ENCODE measurements at regions of chr7 and their contacts with region 1.

Region 1: DNA sequence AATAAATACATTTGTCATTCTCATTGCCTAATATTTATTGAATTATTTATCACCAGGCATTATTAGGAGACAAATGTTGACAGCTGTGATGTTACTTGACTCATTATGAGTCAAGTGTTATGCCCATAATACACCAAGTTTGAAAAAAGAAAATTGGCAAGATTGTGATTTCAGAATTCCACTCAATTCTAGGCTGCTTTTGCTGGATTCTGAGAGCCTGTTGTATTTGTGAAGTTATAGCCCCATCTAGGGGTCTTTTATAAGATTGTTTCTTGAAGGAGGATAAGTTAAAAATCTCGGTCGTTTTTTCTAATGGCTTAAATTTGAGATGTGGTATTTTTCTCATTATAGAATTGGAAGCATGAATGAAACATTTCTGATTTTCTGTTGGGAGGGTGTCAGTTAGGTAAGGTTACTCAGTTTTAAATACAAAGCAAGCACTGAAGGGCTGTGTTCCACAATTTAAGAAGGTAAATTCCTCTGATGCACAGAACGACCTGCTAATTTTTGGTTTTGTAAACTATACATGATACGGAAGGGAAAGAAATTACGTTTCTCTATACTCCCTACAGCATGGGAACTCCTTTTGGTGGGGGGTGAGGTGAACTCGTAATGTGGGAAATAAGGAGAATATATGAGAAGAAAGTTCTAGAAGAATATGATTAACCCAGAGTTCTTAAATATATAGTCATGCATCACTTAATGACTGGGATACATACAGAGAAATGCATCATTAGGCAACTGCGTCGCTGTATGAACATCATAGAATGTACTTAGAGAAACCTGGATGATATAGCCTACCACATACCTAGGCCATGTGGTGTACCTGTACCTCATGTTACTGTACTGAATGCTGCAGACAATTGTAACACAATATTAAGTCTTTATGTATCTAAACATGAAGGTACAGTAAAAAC is 2.6 kb downstream of the STK31 start:
- DNase-seq: peak in 1 of 2 donors; percentile 81
- H3K4me3 ChIP-seq: no peak overlapping the region
- H3K27ac ChIP-seq: no peak overlapping the region
- H3K4me1 ChIP-seq: peaks cover 0 to 13% (median 4%) of the 10 kb centered on the region in 4 donors
- H3K27me3 ChIP-seq: no peaks in the 10 kb centered on the region
- CTCF ChIP-seq: peak in 5 of 7 experiments; percentile 17 to 65 (median 41)
- EP300 ChIP-seq: no peak
- POLR2A ChIP-seq: no peak

Region 2: DNA sequence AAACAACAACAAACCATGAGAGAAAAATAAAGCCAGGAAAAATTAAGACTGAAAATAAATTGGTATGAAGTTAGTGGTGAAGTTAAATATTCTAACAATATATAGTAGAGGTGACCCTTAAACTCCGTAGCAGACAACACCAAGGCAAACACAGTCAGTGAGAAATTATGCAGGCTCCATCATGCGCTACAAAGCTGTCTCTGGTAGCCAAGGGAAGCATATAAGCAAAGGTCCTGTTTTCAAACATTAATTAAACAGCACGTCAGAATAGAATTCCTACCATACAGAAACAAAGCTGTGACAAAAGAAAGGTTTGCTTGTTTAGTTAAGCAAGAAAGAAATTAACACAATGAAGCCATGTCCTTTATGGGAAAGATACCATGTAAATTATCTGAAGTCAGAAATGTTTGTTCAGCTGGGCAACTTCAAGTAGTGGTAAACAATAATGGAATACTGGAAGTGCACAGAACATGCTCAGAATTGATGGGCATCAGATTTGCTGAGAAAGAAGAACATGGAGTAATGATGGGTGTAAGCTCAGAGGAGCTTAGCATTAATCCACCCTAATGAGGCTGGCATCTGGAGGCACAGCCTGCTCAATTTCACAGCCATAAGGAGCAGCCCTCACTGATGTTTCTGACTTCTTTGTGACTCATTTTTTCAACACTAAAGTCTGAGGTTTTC is 318.0 kb before region 1 on chr7:
- intact Hi-C with region 1: no loop called
- DNase-seq: peak in 1 of 2 donors; percentile 56
- H3K4me3 ChIP-seq: no peak overlapping the region
- H3K27ac ChIP-seq: no peak overlapping the region
- H3K4me1 ChIP-seq: peaks cover 0 to 25% (median 0%) of the 10 kb centered on the region in 4 donors
- H3K27me3 ChIP-seq: no peaks in the 10 kb centered on the region
- CTCF ChIP-seq: no peak
- EP300 ChIP-seq: no peak
- POLR2A ChIP-seq: no peak

Region 3: DNA sequence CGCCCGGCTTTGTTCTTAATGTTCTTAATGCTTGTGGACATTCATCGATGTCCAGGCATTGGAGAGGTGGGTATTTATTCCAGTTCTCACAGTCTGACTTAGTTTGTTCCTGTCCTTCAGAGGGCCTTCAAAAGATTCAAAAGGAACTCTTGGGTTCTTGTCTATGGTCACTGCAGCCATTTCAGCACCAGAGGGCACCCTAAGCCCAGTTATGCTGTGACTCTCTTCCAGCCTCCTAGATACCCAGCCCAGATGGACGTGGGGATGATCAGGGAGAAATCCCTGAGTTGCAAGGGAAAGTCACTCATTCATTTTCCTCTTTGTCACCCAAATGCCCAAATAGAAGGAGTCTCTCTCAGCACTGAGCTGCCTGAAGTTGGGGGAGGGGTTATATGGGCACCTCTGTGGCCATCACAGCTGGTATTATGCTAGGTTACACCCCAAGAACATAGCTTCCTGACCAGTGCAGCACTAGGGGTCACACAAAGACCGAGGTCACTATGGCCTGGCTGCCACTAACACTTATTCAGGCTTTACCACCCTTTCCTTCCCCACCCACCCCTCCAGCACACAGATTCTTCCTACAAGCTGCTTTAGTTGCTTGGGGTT is 141.9 kb before region 1 on chr7:
- intact Hi-C with region 1: loop called (anchors 5 kb)
- DNase-seq: peak; percentile 80 to 88
- H3K4me3 ChIP-seq: no peak overlapping the region
- H3K27ac ChIP-seq: no peak overlapping the region
- H3K4me1 ChIP-seq: peaks cover 0 to 7% (median 0%) of the 10 kb centered on the region in 4 donors
- H3K27me3 ChIP-seq: peaks cover 0 to 7% (median 0%) of the 10 kb centered on the region in 3 donors
- CTCF ChIP-seq: peak in 5 of 7 experiments; percentile 65 to 94 (median 73)
- EP300 ChIP-seq: no peak
- POLR2A ChIP-seq: no peak

Region 4: GRCh38 chr7:23645822-23646221 is 66.8 kb before region 1 on chr7:
- intact Hi-C with region 1: no loop called
- DNase-seq: no peak
- H3K4me3 ChIP-seq: no peak overlapping the region
- H3K27ac ChIP-seq: no peak overlapping the region
- H3K4me1 ChIP-seq: no peaks in the 10 kb centered on the region
- H3K27me3 ChIP-seq: no peaks in the 10 kb centered on the region
- CTCF ChIP-seq: no peak
- EP300 ChIP-seq: no peak
- POLR2A ChIP-seq: no peak

Region 5: GRCh38 chr7:23918856-23919255 is 206.2 kb after region 1 on chr7:
- intact Hi-C with region 1: no loop called
- DNase-seq: no peak
- H3K4me3 ChIP-seq: no peak overlapping the region
- H3K27ac ChIP-seq: no peak overlapping the region
- H3K4me1 ChIP-seq: peaks cover 0 to 15% (median 0%) of the 10 kb centered on the region in 4 donors
- H3K27me3 ChIP-seq: no peaks in the 10 kb centered on the region
- CTCF ChIP-seq: no peak
- EP300 ChIP-seq: no peak
- POLR2A ChIP-seq: no peak

Measured in stomach (tissue), 19 donors.